AG04449 (cell line): ENCODE measurements at regions of chr21 and their contacts with region 1.

Region 1: GRCh38 chr21:25039461-25040380 is 567.6 kb downstream of the MRPL39 start:
- DNase-seq: no peak
- H3K4me3 ChIP-seq: no peak overlapping the region
- CTCF ChIP-seq: no peak

Region 2: DNA sequence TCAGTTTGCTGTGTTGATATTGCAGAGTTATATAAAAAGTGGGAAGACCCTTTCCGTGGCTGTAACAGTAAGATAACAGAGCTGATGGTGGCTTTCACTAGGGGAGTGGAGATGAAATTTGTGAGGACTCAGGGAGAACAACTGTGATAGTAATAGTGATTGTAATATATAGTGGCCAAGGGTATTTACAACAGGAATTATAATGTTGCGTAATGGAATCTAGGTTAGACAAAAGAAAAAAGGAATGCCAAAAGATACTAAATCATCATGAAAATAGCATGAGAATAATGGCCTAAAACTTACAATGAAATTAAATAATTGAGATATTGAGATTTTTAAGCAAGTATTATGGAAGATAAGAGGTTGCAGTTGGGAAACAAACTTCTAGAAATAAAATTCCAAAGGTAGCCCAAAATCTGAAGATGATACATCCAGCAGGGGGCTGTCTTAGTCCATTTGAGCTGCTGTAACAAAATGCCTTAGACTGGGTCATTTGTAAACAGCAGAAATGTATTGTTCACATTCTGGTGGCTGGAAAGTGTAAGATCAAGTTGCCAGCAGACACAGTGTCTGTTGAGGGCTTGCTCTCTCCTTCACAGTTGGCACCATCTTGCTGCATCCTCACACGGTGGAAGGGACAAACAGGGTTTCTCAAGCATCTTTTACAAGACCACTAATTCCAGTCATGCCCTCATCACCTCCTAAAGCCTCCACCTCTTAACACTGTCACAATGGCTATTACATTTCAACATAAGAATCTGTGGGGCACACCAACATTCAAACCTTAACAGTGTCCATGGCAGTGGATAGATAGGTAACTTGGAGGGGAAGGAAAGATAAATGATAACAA is 143.6 kb before region 1 on chr21:
- CTCF ChIA-PET with region 1: interaction called, 13 read pairs
- POLR2A ChIA-PET with region 1: no interaction called
- DNase-seq: no peak
- H3K4me3 ChIP-seq: no peak overlapping the region
- CTCF ChIP-seq: peak; percentile 51

Region 3: DNA sequence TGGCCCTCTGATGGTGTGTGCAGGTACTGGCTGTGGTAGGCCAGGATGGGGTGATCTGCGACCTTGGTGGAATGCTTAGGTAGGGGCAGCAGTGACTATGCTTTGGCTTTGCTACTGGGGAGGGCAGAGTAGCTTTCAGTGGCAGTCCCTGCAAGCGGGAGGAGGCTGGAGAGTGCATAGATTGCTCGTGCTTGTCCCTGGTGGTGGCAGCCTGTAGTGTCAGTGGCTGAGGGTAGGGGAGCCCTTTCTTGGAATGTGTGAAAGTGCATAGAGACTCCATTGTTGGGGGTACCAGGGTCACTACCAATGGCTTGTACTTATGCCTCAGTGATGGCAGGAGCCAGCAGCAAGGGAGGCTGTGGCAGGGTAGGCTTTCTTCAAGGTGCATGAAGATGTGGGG is 15.1 kb before region 1 on chr21:
- CTCF ChIA-PET with region 1: no interaction called
- POLR2A ChIA-PET with region 1: no interaction called
- DNase-seq: no peak
- H3K4me3 ChIP-seq: no peak overlapping the region
- CTCF ChIP-seq: no peak